PC-3 (cell line): ENCODE measurements at regions of chr2 and their contacts with region 1.

Region 1: DNA sequence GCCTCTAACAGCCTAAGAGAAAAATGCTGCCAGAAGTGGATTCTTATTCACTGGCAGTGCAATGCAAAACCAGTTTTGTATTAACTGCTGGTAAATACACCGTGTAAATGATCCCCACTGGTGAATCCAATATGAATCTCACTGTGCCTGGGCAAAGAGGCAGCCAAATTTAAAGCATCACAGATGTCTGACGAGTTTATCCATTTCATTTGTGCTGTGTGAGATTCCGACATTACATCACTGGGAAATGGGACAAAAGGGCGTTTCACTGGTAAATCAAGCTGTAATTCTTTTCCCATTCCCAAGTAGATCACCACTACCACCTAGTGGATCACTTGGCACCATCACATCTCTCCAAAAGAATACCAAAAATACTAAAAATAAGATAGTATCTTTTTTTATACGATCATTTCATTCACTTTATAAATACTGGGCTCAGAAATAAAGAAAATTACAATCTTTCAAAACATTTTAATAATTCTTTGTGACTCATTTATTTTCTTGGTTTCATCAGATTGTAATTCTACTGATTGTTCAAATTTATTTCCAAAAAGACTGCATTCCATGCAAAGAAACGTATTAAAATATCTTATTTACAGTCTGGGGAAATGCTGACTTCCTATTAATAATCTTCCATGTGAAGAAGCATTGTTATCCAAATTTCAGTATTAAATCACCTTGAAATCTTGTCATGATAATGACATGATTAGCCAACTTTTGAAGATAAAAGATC is 125.6 kb downstream of the GRB14 start:
- DNase-seq: peak; percentile 70
- ATAC-seq: peak; percentile 74
- H3K4me3 ChIP-seq: no peak overlapping the region
- H3K27ac ChIP-seq: no peak overlapping the region
- H3K4me1 ChIP-seq: no peaks in the 10 kb centered on the region
- H3K27me3 ChIP-seq: peaks cover 64% of the 10 kb centered on the region
- CTCF ChIP-seq: peak; percentile 76

Region 2: GRCh38 chr2:163155279-163155883 is 1340.3 kb before region 1 on chr2:
- CTCF ChIA-PET with region 1: no interaction called
- POLR2A ChIA-PET with region 1: no interaction called
- intact Hi-C with region 1: loop called (anchors 1 kb)
- DNase-seq: peak; percentile 67
- ATAC-seq: peak; percentile 70
- H3K4me3 ChIP-seq: no peak overlapping the region
- H3K27ac ChIP-seq: no peak overlapping the region
- H3K4me1 ChIP-seq: peaks cover 6% of the 10 kb centered on the region; the same call in 1 of the 2 replicates
- H3K27me3 ChIP-seq: peaks cover 20% of the 10 kb centered on the region
- CTCF ChIP-seq: peak; percentile 74

Region 3: DNA sequence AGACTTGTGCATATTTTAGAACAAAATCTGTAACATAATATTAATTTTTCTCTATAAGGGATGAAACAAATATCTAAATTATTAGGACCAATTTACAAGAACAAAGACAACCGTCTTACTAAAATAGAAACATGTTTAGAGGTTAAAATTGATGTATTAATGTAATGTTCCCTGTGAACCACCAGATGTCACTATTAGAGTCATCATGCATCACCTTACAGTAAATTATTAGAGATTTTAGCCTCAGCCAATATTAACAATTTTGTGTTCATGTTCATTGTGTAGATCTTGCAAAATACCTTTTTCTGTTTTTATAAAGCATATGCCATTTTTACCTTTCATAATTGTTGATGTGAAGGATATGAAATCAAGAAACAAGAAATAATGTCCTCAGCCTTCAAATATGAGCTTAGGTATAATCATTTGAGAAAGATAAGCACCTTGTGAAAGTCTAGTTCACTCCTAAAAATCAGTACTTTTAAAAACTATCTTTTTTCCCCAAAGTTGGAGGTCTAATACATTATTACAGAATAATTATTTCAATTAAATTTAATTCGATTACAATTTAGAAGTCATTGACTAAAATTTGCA is 1312.8 kb before region 1 on chr2:
- CTCF ChIA-PET with region 1: no interaction called
- POLR2A ChIA-PET with region 1: no interaction called
- intact Hi-C with region 1: loop called (anchors 2 kb)
- DNase-seq: peak; percentile 14
- ATAC-seq: no peak
- H3K4me3 ChIP-seq: no peak overlapping the region
- H3K27ac ChIP-seq: no peak overlapping the region
- H3K4me1 ChIP-seq: no peaks in the 10 kb centered on the region
- H3K27me3 ChIP-seq: peaks cover 10% of the 10 kb centered on the region
- CTCF ChIP-seq: peak; percentile 66

Region 4: DNA sequence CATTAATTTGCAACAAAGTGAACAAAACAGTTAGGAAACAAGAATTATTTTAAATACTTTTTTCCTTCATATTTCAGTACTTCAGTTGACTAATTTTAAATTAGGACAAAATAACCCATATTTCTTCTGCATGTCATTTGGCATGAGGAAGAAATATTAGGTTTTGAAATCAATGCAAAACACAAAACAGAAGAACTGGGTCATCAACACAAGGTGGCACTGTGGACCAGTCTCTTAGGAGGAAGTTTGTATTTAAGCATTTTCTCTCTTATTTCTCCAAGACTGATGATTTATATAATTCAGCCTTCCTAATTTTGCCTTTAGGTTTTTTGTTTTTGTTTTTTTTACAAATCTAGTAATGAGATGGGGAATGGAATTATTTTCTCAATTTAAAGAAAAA is 1304.3 kb before region 1 on chr2:
- CTCF ChIA-PET with region 1: no interaction called
- POLR2A ChIA-PET with region 1: no interaction called
- intact Hi-C with region 1: loop called (anchors 2 kb)
- DNase-seq: peak; percentile 61
- ATAC-seq: peak; percentile 40; the same call in 1 of the 2 replicates
- H3K4me3 ChIP-seq: no peak overlapping the region
- H3K27ac ChIP-seq: no peak overlapping the region
- H3K4me1 ChIP-seq: no peaks in the 10 kb centered on the region
- H3K27me3 ChIP-seq: 0 out of 2 replicates have a peak, but pooled peaks cover 3% of the 10 kb centered on the region
- CTCF ChIP-seq: peak; percentile 82

Region 5: GRCh38 chr2:163345908-163346573 is 1149.6 kb before region 1 on chr2:
- CTCF ChIA-PET with region 1: no interaction called
- POLR2A ChIA-PET with region 1: no interaction called
- intact Hi-C with region 1: loop called (anchors 5 kb)
- DNase-seq: peak; percentile 85
- ATAC-seq: 0 out of 2 replicates have a peak, but pooled peaks have one; percentile 8
- H3K4me3 ChIP-seq: no peak overlapping the region
- H3K27ac ChIP-seq: no peak overlapping the region
- H3K4me1 ChIP-seq: peaks cover 25% of the 10 kb centered on the region
- H3K27me3 ChIP-seq: no peaks in the 10 kb centered on the region
- CTCF ChIP-seq: peak; percentile 82

Region 6: GRCh38 chr2:163465440-163465839 is 1030.2 kb before region 1 on chr2:
- CTCF ChIA-PET with region 1: no interaction called
- POLR2A ChIA-PET with region 1: no interaction called
- intact Hi-C with region 1: loop called (anchors 5 kb)
- DNase-seq: no peak
- ATAC-seq: no peak
- H3K4me3 ChIP-seq: no peak overlapping the region
- H3K27ac ChIP-seq: no peak overlapping the region
- H3K4me1 ChIP-seq: no peaks in the 10 kb centered on the region
- H3K27me3 ChIP-seq: peaks cover 76% of the 10 kb centered on the region
- CTCF ChIP-seq: no peak

Region 7: DNA sequence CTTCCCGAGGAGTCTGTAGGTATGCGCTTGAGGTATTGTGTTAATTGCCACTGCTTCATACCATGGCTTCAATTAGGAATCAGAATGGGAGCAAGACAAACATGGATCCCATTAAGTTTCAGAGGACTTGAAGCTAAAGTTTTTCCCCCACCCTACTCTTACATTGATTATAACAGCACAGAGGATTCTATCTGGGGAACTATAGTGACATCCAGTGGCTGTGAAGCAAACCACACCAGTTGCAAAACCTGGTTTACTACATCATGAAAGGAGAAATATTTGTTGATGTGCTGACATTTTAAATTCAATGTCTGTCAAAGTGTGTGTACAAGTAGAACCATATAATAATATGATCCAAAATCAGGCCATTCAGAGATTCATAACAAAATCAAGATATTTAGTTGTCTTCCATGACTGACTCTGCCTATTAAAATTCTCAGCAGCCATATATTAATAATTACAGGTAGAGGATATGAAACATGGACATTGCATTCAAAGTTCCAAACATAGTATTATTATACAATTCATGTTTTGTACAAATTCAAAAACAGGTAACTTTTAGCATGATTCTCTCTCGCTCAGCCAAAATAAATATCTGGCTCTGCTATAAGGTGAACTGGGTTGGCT is 42.7 kb after region 1 on chr2:
- CTCF ChIA-PET with region 1: no interaction called
- POLR2A ChIA-PET with region 1: no interaction called
- intact Hi-C with region 1: loop called (anchors 2 kb)
- DNase-seq: peak; percentile 73
- ATAC-seq: peak; percentile 82
- H3K4me3 ChIP-seq: no peak overlapping the region
- H3K27ac ChIP-seq: no peak overlapping the region
- H3K4me1 ChIP-seq: peaks cover 19% of the 10 kb centered on the region; the same call in 1 of the 2 replicates
- H3K27me3 ChIP-seq: no peaks in the 10 kb centered on the region
- CTCF ChIP-seq: peak; percentile 92